Sciatic nerve (tissue), 2 donors: ENCODE measurements at regions of chr10 and their contacts with region 1.

Region 1: GRCh38 chr10:5623081-5623748 is 43.2 kb downstream of the ASB13 start:
- DNase-seq: peak; percentile 94
- ATAC-seq: peak; percentile 75

Region 2: DNA sequence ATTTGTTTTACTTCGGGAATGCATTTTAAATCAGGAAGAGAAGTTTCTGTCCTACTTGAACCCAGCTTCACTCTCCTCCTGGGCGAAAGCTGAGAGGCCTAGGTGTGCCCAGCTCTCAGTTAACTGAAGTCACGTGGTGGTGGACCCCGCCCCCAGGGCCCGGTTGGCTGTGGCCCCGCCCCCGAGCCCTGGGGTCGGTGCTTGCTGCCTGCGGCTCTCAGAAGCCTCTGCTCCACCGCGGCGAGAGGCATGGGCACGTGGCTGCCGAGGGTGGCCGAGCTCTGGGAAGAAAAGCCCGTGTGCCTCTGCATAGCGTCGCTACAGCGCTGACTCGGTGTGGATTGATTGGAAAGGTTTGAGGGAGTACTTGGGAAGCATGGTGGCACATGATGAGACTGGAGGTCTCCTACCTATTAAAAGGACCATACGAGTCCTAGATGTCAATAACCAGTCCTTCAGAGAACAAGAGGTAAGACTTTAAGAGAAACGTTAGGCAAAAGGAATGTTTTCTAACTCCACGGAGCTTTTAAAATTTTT is 176.8 kb before region 1 on chr10:
- intact Hi-C with region 1: loop called (anchors 5 kb)
- DNase-seq: peak; percentile 95
- ATAC-seq: peak; percentile 98